ENCODE measurements at regions of chr15 and their contacts with region 1.

Region 1: DNA sequence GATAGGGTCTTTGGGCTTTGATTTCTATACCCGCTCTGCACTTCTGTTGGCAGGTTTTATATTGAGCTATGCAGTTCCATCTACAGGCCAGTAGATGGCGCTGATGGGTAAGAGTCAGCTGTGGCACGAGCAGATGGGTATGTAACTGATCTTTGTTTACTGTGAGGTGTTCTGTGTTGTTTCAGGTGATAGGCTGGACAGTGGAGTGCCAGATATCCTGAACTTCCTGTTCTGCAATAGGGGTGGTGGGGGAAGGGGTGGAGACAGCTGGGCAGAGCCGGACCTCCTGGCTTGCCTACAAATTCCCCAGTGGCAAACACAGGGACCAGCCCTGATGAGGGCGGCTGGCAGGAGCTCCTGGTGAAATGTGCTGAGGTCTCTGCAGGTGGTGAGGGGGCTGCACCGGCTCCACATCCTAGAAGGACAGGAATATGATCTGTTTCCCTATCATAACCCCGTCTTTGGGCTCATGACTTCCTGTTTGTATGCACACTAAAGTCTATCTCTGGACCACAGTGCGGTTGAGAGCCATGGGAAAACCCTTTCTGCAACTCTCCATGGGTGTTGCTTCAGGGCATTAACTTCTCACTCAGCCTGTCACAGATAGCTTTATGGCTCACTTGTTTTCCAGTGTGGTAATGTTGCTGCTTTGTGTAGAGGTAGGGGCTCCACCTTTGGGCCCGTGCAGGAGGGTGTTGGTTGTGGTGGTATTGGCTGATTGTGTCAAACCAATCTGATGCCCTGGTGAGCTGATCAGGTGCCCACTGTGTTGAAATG is 13.4 kb upstream of the FAM98B start:
- DNase-seq: peak in 1 of 2 donors; percentile 42
- ATAC-seq: peak in 7 of 8 donors; percentile 74 to 85 (median 81)
- H3K4me3 ChIP-seq: no peak overlapping the region
- H3K27ac ChIP-seq: no peak overlapping the region
- H3K4me1 ChIP-seq: peaks cover 0 to 9% (median 0%) of the 10 kb centered on the region in 9 donors
- H3K27me3 ChIP-seq: peaks cover 0 to 14% (median 6%) of the 10 kb centered on the region in 7 donors
- CTCF ChIP-seq: peak; percentile 87 to 97 (median 92)

Region 2: GRCh38 chr15:38683382-38684242 is 243.1 kb after region 1 on chr15:
- intact Hi-C with region 1: loop called in 9 of 10 experiments (anchors 1 to 10 kb)
- DNase-seq: peak; percentile 18 to 42
- ATAC-seq: peak in 7 of 8 donors; percentile 56 to 81 (median 69)
- H3K4me3 ChIP-seq: no peak overlapping the region
- H3K27ac ChIP-seq: peak overlapping the region in 1 of 10 donors; percentile 66
- H3K4me1 ChIP-seq: peaks cover 0 to 28% (median 0%) of the 10 kb centered on the region in 9 donors
- H3K27me3 ChIP-seq: peaks cover 0 to 7% (median 0%) of the 10 kb centered on the region in 7 donors
- CTCF ChIP-seq: peak; percentile 52 to 81 (median 74)

Region 3: DNA sequence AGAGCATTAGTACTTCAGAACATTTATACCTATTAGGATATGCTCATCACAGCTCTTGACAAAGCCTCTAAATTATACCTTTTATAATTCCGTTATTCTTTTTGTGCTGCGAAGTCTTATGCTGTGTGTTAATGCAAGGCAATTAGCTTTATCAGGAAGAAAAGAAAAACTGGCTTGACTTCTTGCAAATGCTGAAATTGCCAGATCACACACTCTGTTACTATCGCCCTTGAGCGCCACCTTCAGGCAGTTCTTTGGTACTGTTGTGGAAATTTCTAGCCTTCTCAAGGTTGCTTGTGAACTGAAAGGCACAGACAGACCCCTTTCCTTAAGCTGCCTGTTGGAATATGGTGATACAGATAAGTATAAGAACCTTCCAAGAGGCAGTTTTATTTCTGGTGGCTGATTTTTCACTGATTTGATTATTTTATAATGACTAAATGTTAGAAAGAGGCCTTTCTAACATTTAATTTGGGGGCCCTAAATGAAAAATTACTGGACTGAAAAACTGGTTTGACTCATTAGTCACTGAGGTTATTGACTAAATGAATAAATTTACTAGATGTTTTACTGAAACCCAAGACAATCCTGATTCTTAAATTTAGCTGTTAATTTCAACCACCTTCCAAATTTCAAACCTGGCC is 250.3 kb after region 1 on chr15:
- intact Hi-C with region 1: loop called in 7 of 10 experiments (anchors 2 to 10 kb)
- DNase-seq: peak; percentile 21 to 39
- ATAC-seq: peak in 4 of 8 donors; percentile 20 to 50 (median 34)
- H3K4me3 ChIP-seq: no peak overlapping the region
- H3K27ac ChIP-seq: no peak overlapping the region
- H3K4me1 ChIP-seq: peaks cover 0 to 17% (median 0%) of the 10 kb centered on the region in 9 donors
- H3K27me3 ChIP-seq: no peaks in the 10 kb centered on the region
- CTCF ChIP-seq: peak; percentile 59 to 88 (median 78)

Measured in heart right ventricle (tissue), 16 donors.